Right ventricle myocardium superior (tissue), 1 donor: ENCODE measurements at regions of chr11 and their contacts with region 1.

Region 1: GRCh38 chr11:56776809-56777208 is 28.3 kb upstream of the OR9G4 start:
- DNase-seq: no peak
- ATAC-seq: no peak

Region 2: DNA sequence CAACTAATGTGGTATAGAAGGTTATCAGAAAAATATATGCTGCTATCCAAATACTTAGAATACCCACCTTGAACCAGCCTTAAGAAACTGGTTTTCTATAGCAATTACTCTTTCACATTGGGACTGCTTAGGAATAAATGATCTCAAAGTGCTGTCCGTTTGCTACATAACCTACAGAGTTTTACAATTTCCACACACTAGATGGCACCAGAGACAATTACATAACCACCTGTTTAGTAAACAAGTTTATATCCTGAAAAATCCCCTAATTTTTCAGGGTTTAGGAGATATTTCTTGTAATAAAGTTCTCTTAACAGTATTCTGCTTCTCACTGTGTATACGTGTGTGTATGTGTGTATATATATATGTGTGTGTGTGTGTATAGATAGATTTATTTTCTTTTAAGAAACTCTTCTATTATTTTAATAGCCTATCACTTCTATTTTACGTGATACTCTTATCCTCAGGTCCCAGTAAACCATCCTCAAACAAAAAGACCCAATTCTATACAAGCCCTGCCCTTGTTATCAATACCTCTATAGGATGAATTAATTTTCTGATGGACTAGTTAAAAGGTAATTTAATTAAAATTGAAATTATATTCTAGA is 833.9 kb before region 1 on chr11:
- intact Hi-C with region 1: loop called (anchors 10 kb)
- DNase-seq: no peak
- ATAC-seq: no peak

Region 3: GRCh38 chr11:56716379-56716854 is 60.4 kb before region 1 on chr11:
- intact Hi-C with region 1: no loop called
- DNase-seq: no peak
- ATAC-seq: no peak